CD4-positive, alpha-beta memory T cell (primary cell): ENCODE measurements at regions of chr6 and their contacts with region 1.

Region 1: DNA sequence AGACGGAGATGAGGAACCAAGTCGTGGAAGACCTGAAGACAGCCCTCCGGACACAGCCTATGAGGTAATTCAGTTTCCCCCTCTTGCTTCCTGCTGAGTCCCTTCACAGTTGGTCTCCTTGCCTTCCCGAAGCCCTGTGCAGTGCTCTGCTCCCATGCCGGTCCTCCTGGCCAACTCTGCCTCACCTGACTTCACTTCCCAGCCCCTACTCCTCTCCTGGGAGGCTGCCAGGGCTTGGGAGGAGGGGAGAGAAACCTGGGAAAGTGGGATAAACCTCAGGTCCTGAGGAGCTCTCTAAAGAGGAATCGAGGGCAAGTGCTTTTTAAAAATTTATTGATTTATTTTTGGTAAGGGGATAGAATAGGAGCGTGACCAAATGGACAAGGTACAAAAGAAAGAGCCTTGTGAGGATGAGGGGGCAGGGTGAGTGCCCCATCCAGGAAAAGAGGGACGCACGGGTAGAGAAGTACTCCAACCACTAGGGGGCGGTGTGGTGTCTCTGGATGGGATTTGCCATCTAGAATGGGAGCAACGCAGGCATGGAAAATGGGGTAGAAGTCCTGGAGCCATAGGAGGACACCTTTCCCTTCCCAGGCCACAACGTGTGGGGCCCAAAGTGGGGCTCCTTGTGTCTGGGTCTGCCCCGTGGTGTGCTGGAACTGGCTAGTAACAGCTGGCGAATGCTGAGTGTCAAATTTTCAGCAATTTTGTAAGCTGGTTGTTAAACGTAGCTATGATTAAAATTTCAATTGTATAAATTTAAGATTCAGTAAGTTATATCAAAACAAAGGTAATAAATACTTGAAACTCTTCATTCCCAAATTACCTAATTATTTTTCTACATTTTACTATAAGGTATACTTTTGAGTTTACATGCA is 69.0 kb downstream of the MOCS1 start:
- DNase-seq: peak in 4 of 5 donors; percentile 3 to 11 (median 6)
- H3K4me3 ChIP-seq: no peak overlapping the region
- H3K4me3 Mint-ChIP-seq: no peak overlapping the region
- H3K27ac ChIP-seq: no peak overlapping the region
- H3K27ac Mint-ChIP-seq: no peak overlapping the region
- H3K4me1 ChIP-seq: no peaks in the 10 kb centered on the region
- H3K4me1 Mint-ChIP-seq: no peaks in the 10 kb centered on the region
- H3K27me3 ChIP-seq: no peaks in the 10 kb centered on the region
- H3K27me3 Mint-ChIP-seq: peaks cover 8 to 9% of the 10 kb centered on the region in 2 donors

Region 2: GRCh38 chr6:39850736-39851297 is 14.4 kb before region 1 on chr6:
- CTCF ChIA-PET with region 1: interaction called, 14 read pairs
- POLR2A ChIA-PET with region 1: no interaction called
- intact Hi-C with region 1: no loop called
- DNase-seq: no peak
- H3K4me3 ChIP-seq: no peak overlapping the region
- H3K4me3 Mint-ChIP-seq: no peak overlapping the region
- H3K27ac ChIP-seq: no peak overlapping the region
- H3K27ac Mint-ChIP-seq: no peak overlapping the region
- H3K4me1 ChIP-seq: no peaks in the 10 kb centered on the region
- H3K4me1 Mint-ChIP-seq: no peaks in the 10 kb centered on the region
- H3K27me3 ChIP-seq: no peaks in the 10 kb centered on the region
- H3K27me3 Mint-ChIP-seq: peaks cover 0 to 9% of the 10 kb centered on the region in 2 donors

Region 3: DNA sequence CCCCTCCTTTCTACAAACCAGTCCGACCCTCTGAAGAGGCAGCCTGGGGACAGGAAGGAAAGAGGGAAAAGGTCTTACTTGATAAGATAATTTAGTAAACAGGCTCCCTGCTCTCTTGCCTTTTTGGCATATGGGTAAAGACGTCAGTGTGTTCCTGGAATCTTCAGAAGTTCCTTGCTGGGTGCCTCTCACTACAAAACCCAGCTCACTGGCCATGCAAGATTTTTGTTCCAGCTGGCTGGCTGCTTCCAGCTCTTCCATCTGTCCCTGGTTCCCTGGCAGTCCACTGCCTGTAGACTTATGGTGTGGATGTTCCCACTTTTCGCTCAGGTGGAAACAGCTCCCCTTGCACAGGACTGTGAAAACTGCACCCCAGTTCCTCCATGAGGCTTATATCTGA is 11.6 kb after region 1 on chr6:
- CTCF ChIA-PET with region 1: interaction called, 23 read pairs
- POLR2A ChIA-PET with region 1: no interaction called
- intact Hi-C with region 1: no loop called
- DNase-seq: no peak
- H3K4me3 ChIP-seq: no peak overlapping the region
- H3K4me3 Mint-ChIP-seq: no peak overlapping the region
- H3K27ac ChIP-seq: no peak overlapping the region
- H3K27ac Mint-ChIP-seq: no peak overlapping the region
- H3K4me1 ChIP-seq: no peaks in the 10 kb centered on the region
- H3K4me1 Mint-ChIP-seq: no peaks in the 10 kb centered on the region
- H3K27me3 ChIP-seq: no peaks in the 10 kb centered on the region
- H3K27me3 Mint-ChIP-seq: peaks cover 2% of the 10 kb centered on the region in 2 donors